ENCODE measurements at regions of chr14 and their contacts with region 1.

Region 1: GRCh38 chr14:74867673-74868072 is 8.3 kb downstream of the PROX2 start:
- DNase-seq: no peak
- ATAC-seq: no peak
- H3K4me3 ChIP-seq: no peak overlapping the region
- H3K27ac ChIP-seq: no peak overlapping the region
- H3K4me1 ChIP-seq: no peaks in the 10 kb centered on the region
- H3K27me3 ChIP-seq: no peaks in the 10 kb centered on the region
- CTCF ChIP-seq: no peak

Region 2: GRCh38 chr14:74852927-74853514 is 14.7 kb before region 1 on chr14:
- CTCF ChIA-PET with region 1: interaction called, 3 read pairs
- POLR2A ChIA-PET with region 1: interaction called, 19 read pairs
- in situ Hi-C with region 1: no loop called
- intact Hi-C with region 1: no loop called
- DNase-seq: no peak
- ATAC-seq: no peak
- H3K4me3 ChIP-seq: no peak overlapping the region
- H3K27ac ChIP-seq: no peak overlapping the region
- H3K4me1 ChIP-seq: no peaks in the 10 kb centered on the region
- H3K27me3 ChIP-seq: no peaks in the 10 kb centered on the region
- CTCF ChIP-seq: no peak

Region 3: GRCh38 chr14:74886001-74886400 is 18.3 kb after region 1 on chr14:
- CTCF ChIA-PET with region 1: no interaction called
- POLR2A ChIA-PET with region 1: interaction called, 15 read pairs
- in situ Hi-C with region 1: no loop called
- intact Hi-C with region 1: no loop called
- DNase-seq: no peak
- ATAC-seq: no peak
- H3K4me3 ChIP-seq: no peak overlapping the region
- H3K27ac ChIP-seq: no peak overlapping the region
- H3K4me1 ChIP-seq: peaks cover 18% of the 10 kb centered on the region
- H3K27me3 ChIP-seq: no peaks in the 10 kb centered on the region
- CTCF ChIP-seq: no peak